CD8-positive, alpha-beta T cell (primary cell): ENCODE measurements at regions of chr12 and their contacts with region 1.

Region 1: DNA sequence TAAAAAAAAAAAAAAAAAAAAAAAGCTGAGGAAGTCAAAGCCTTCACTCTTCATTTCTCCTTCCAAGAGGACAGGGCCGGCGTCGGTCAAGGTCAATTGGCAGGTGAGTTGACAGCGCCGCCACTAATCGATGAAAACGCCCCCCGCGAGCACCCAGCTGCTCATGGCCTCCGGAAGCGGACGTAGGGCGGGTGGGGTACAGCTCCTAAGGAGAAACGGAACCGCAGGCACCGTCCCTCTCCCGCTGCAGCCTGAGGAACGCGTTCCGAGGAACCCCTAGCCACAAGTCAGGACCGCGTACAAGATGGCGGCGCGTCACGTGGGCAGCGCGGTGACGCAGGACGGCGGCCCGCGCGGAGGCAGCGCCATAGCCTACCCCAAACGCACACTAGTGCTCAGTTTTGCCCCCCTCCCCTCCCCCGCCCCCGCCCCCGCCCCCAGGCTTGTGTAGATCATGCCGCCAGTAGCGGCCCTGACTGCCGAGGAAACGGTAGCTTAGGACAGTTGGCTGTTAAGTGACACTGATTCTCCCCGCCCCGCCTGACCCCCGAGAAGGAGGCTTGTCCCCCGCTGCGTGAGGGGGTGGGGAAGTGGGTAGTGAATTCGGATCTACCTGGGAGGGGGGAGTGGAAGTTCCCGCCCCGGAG is at the start of gene ATF1:
- DNase-seq: peak; percentile 80 to 96 (median 87)
- ATAC-seq: peak; percentile 67
- H3K4me3 ChIP-seq: peak within 1 kb of the TSS; percentile 95 to 96
- H3K4me3 Mint-ChIP-seq: peak within 1 kb of the TSS; percentile 84
- H3K27ac ChIP-seq: peak within 1 kb of the TSS; percentile 93 to 95
- H3K27ac Mint-ChIP-seq: peak within 1 kb of the TSS; percentile 91
- H3K4me1 ChIP-seq: peaks cover 20% of the 10 kb centered on the region
- H3K4me1 Mint-ChIP-seq: peaks cover 30% of the 10 kb centered on the region
- H3K27me3 ChIP-seq: no peaks in the 10 kb centered on the region
- H3K27me3 Mint-ChIP-seq: no peaks in the 10 kb centered on the region
- CTCF ChIP-seq: no peak
- total RNA-seq, gene ATF1: 11.3 to 16.0 TPM

Region 2: DNA sequence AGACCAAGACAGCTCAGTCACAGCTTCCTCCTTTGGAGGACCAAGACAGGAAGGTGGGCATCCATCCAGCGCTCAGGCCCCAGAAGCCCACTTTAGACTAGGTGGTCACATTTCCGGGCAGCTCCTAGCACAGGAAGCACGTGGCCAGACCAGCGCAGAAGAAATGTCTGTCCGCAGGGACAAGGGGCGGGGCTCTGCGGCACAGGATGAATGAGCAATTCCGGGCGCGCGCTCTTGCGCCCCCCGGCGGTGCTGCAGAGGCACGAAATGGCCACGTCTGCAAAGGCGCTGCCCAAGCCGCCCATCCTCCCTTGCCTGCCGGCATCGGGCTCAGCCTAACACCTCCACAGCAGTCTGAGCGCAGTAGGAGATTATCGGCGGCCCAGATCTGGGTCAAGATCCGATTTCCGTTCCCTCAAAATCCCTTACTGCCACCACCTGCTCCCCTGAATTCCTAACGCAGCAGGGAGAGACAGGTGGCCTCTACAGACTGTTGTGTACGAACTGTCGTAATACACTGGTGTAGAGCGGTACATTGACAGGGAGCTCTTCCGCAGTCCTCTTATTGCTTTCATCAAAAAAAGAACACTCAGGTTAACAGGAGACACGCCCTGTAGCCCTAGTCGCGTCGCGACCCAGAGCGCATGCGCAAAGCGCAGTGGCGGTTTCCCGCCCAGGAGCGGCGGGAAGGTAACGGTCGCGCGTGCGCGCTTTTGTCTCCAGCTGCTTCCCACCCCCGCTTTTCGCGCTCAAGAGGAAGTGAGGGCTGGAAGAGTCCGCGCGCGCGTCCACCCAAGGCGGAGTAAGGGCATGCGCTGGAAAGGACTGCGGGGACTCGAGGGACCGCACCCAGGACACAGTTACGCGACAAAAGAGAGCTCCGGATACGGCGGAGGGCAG is 1633.4 kb before region 1 on chr12:
- CTCF ChIA-PET with region 1: no interaction called
- POLR2A ChIA-PET with region 1: no interaction called
- intact Hi-C with region 1: loop called in 1 of 2 experiments (anchors 5 kb)
- DNase-seq: peak; percentile 78 to 97 (median 92)
- ATAC-seq: peak; percentile 67
- H3K4me3 ChIP-seq: peak overlapping the region; percentile 88 to 91
- H3K4me3 Mint-ChIP-seq: peak overlapping the region; percentile 96
- H3K27ac ChIP-seq: peak overlapping the region; percentile 90 to 96
- H3K27ac Mint-ChIP-seq: peak overlapping the region; percentile 99
- H3K4me1 ChIP-seq: peaks cover 25% of the 10 kb centered on the region
- H3K4me1 Mint-ChIP-seq: peaks cover 47% of the 10 kb centered on the region
- H3K27me3 ChIP-seq: no peaks in the 10 kb centered on the region
- H3K27me3 Mint-ChIP-seq: no peaks in the 10 kb centered on the region
- CTCF ChIP-seq: peak; percentile 96

Region 3: GRCh38 chr12:50504798-50505385 is 258.9 kb before region 1 on chr12 and contains the start of gene DIP2B:
- CTCF ChIA-PET with region 1: no interaction called
- POLR2A ChIA-PET with region 1: no interaction called
- intact Hi-C with region 1: loop called in 1 of 2 experiments (anchors 1 kb)
- DNase-seq: peak; percentile 92 to 97 (median 95)
- ATAC-seq: peak; percentile 92
- H3K4me3 ChIP-seq: peak within 1 kb of the TSS; percentile 88 to 91
- H3K4me3 Mint-ChIP-seq: peak within 1 kb of the TSS; percentile 94
- H3K27ac ChIP-seq: peak within 1 kb of the TSS; percentile 63 to 73
- H3K27ac Mint-ChIP-seq: peak within 1 kb of the TSS; percentile 92
- H3K4me1 ChIP-seq: peaks cover 42% of the 10 kb centered on the region
- H3K4me1 Mint-ChIP-seq: peaks cover 50% of the 10 kb centered on the region
- H3K27me3 ChIP-seq: no peaks in the 10 kb centered on the region
- H3K27me3 Mint-ChIP-seq: no peaks in the 10 kb centered on the region
- CTCF ChIP-seq: peak; percentile 86
- total RNA-seq, gene DIP2B: 18.8 to 20.7 TPM

Region 4: DNA sequence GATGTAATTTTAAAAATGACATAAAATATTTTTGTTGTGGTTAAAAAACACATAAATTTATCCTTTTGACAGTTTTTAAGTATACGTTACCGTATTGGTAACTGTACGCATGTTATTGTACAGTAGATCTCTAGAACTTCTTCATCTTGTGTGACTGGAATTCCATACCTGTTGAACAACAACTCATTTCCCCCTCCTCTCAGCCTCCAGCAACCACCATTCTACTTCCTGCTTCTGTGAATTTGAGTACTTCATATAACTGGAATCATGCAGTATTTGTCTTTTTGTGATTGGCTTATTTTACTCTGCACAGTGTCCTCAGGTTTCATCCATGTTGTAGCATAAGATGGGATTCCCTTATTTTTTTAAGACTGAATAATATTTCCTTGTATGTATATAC is 113.5 kb before region 1 on chr12:
- CTCF ChIA-PET with region 1: no interaction called
- POLR2A ChIA-PET with region 1: no interaction called
- intact Hi-C with region 1: no loop called
- DNase-seq: no peak
- ATAC-seq: no peak
- H3K4me3 ChIP-seq: no peak overlapping the region
- H3K4me3 Mint-ChIP-seq: no peak overlapping the region
- H3K27ac ChIP-seq: no peak overlapping the region
- H3K27ac Mint-ChIP-seq: no peak overlapping the region
- H3K4me1 ChIP-seq: no peaks in the 10 kb centered on the region
- H3K4me1 Mint-ChIP-seq: peaks cover 14% of the 10 kb centered on the region
- H3K27me3 ChIP-seq: no peaks in the 10 kb centered on the region
- H3K27me3 Mint-ChIP-seq: no peaks in the 10 kb centered on the region
- CTCF ChIP-seq: no peak

Region 5: DNA sequence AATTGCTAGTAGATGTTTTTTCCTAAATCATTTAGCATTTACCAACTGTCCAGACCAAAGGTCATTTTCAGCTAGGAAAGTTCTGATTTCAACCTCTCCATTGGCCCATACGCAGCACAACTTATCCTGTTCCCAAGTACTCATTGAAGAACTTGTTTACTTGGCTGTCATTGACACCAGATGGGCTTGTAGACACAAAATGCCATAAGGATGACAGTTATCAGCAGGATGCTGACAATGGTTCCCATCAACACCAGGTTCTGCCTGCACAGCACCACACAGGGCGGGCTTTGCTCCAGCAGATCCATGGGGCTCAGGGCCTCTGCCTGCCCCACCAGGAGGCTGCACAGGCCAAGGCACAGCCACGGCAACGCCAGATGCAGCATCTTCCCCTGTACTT is 42.4 kb after region 1 on chr12:
- CTCF ChIA-PET with region 1: no interaction called
- POLR2A ChIA-PET with region 1: no interaction called
- intact Hi-C with region 1: loop called (anchors 5 kb)
- DNase-seq: no peak
- ATAC-seq: no peak
- H3K4me3 ChIP-seq: no peak overlapping the region
- H3K4me3 Mint-ChIP-seq: no peak overlapping the region
- H3K27ac ChIP-seq: no peak overlapping the region
- H3K27ac Mint-ChIP-seq: no peak overlapping the region
- H3K4me1 ChIP-seq: no peaks in the 10 kb centered on the region
- H3K4me1 Mint-ChIP-seq: no peaks in the 10 kb centered on the region
- H3K27me3 ChIP-seq: no peaks in the 10 kb centered on the region
- H3K27me3 Mint-ChIP-seq: no peaks in the 10 kb centered on the region
- CTCF ChIP-seq: no peak

Region 6: DNA sequence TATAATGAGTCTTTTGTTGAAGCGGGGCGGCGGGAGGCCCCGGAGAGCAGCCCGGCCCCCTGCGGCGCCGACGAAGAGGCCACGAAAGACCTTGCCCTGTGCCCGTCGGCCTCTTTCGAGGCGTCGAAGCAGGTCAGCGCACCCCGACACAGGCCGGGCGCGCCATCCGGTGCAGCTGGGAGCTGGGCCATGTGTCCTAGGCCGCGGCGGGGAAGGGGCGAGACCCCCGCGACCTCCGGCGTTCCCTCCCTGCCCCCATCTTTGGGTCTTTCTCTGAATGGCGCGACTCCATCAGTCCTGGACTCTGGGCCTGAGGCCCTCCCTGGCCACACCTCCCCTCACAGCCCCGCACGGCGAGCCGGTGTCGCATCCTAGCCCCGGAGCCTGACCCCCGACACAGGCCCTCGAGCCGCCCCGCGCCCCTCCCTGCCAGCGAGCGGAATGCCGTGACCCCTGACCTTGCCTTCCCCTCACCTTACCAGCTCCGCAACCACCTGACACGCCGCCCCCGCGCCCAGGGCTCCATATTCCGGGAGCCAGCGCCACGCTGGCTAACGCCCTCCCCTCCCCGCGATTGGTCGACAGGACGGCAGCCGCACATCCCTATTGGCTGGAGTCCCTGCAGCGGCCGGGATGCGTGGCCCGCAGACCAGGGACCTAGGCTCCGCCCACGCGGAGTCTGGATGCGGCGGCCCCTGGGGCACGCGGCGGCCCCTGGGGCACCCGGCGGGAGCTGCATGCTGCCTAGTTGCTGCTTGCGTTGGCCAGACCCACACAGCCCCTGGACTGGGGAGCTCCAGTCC is 262.3 kb after region 1 on chr12 and contains the start of gene SLC11A2:
- CTCF ChIA-PET with region 1: interaction called, 6 read pairs
- POLR2A ChIA-PET with region 1: interaction called, 19 read pairs
- intact Hi-C with region 1: loop called (anchors 1 kb)
- DNase-seq: peak; percentile 75 to 96 (median 90)
- ATAC-seq: peak; percentile 90
- H3K4me3 ChIP-seq: peak within 1 kb of the TSS; percentile 76 to 83
- H3K4me3 Mint-ChIP-seq: peak within 1 kb of the TSS; percentile 98
- H3K27ac ChIP-seq: peak within 1 kb of the TSS; percentile 72 to 80
- H3K27ac Mint-ChIP-seq: peak within 1 kb of the TSS; percentile 99
- H3K4me1 ChIP-seq: peaks cover 41% of the 10 kb centered on the region
- H3K4me1 Mint-ChIP-seq: peaks cover 56% of the 10 kb centered on the region
- H3K27me3 ChIP-seq: no peaks in the 10 kb centered on the region
- H3K27me3 Mint-ChIP-seq: no peaks in the 10 kb centered on the region
- CTCF ChIP-seq: no peak
- total RNA-seq, gene SLC11A2: 35.1 to 43.1 TPM

Region 7: DNA sequence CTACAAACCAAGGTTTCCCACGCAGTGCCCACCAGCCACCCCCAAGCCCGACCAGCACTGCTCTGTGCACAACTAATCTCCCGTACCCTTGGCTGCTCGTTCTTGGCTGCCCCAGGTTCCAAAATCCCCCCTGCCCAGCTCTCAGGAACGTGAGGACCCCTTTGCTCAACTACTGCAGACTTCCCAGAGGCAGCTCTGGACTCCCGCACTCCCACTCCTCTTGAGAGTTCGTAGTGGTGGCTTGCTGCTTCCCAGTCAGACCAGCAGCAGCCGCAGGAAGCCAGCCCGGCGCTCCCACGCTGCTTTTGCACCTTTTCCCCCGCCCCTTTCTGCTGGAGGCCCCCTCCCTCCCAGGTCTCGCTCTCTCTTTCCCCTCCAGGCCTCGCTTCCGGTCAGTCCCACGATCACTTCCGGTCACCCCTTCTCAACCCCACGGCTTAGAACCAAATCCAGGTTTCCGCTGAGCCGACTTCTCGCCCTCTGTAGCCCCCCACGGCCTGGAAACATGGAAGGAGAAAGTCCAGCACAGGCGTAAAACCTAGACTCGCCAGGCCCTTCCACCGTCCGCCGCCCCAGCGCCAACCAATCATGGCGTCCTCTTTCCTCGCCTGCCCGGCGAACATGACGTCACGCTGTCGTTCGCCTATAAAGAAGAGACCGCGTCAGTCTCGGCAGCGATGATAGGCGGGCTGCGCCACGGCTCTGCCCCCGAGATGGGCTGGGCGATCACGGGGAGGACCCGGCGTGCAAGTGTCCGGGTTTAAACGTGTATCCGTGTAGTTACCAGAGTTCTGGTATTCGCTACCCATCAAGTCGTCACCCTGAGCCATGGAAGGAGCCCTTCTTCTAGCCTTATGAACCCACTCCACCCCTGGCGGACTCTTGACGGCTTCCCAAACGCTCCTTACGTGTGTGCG is 409.0 kb after region 1 on chr12 and contains the start of gene TFCP2:
- CTCF ChIA-PET with region 1: no interaction called
- POLR2A ChIA-PET with region 1: no interaction called
- intact Hi-C with region 1: loop called (anchors 2 to 5 kb)
- DNase-seq: peak; percentile 86 to 98 (median 93)
- ATAC-seq: peak; percentile 98
- H3K4me3 ChIP-seq: peak within 1 kb of the TSS; percentile 86 to 91
- H3K4me3 Mint-ChIP-seq: peak within 1 kb of the TSS; percentile 75
- H3K27ac ChIP-seq: peak within 1 kb of the TSS; percentile 95 to 98
- H3K27ac Mint-ChIP-seq: peak within 1 kb of the TSS; percentile 78
- H3K4me1 ChIP-seq: peaks cover 27% of the 10 kb centered on the region
- H3K4me1 Mint-ChIP-seq: peaks cover 20% of the 10 kb centered on the region
- H3K27me3 ChIP-seq: no peaks in the 10 kb centered on the region
- H3K27me3 Mint-ChIP-seq: no peaks in the 10 kb centered on the region
- CTCF ChIP-seq: no peak
- total RNA-seq, gene TFCP2: 8.6 to 9.5 TPM

Region 8: DNA sequence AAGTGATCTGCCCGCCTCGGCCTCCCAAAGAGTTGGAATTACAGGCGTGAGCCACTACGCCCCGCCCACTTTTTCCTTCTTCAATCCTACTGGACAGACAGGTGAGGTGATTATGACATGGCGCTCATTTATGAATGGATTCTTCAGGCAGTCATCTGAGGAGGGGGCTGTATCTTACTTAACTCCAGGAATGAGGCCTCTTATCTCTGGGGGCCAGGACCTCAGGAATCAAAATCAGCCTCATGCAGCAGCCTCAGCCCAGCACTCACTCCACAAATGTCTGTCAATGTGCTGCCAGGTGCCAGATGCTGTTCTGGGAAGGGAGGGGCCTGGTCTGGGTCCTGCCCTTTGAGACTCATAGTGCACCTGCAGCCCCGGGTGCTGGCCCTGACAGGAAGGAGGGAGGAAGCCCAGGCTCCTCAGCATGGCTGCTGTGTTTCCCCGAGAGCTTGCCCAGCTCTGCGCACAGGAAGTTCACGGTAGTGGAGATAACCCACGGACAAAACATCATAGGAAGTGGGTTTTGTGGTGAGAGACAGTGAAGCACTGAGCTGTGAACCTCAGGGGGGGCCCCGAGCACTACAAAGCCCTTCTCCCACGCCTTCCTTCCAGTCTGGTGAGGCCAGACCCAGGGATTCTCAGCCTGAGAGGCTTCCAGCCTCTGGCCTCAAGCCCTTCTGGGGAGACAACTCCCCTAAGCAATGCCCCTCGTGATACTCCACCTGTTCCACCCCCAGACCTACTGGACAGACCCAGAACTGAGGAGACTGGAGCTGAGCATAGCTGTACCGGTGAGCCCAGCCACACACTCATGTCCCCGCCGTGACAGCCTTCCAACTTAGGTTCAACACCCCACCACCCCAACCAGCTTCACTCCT is 605.1 kb after region 1 on chr12:
- CTCF ChIA-PET with region 1: no interaction called
- POLR2A ChIA-PET with region 1: no interaction called
- intact Hi-C with region 1: loop called in 1 of 2 experiments (anchors 5 kb)
- DNase-seq: peak; percentile 78 to 98 (median 88)
- ATAC-seq: peak; percentile 93
- H3K4me3 ChIP-seq: peak overlapping the region; percentile 38 to 49
- H3K4me3 Mint-ChIP-seq: peak overlapping the region; percentile 63
- H3K27ac ChIP-seq: peak overlapping the region; percentile 32 to 66
- H3K27ac Mint-ChIP-seq: peak overlapping the region; percentile 75
- H3K4me1 ChIP-seq: peaks cover 36% of the 10 kb centered on the region
- H3K4me1 Mint-ChIP-seq: peaks cover 49% of the 10 kb centered on the region
- H3K27me3 ChIP-seq: no peaks in the 10 kb centered on the region
- H3K27me3 Mint-ChIP-seq: no peaks in the 10 kb centered on the region
- CTCF ChIP-seq: no peak